PC-9 (cell line): ENCODE measurements at regions of chr3 and their contacts with region 1.

Region 1: GRCh38 chr3:38004415-38005076 is 14.0 kb downstream of the VILL start:
- DNase-seq: peak; percentile 68 to 70
- H3K4me3 ChIP-seq: no peak overlapping the region
- H3K27ac ChIP-seq: no peak overlapping the region
- H3K4me1 ChIP-seq: no peaks in the 10 kb centered on the region
- H3K27me3 ChIP-seq: no peaks in the 10 kb centered on the region
- CTCF ChIP-seq: peak; percentile 75

Region 2: DNA sequence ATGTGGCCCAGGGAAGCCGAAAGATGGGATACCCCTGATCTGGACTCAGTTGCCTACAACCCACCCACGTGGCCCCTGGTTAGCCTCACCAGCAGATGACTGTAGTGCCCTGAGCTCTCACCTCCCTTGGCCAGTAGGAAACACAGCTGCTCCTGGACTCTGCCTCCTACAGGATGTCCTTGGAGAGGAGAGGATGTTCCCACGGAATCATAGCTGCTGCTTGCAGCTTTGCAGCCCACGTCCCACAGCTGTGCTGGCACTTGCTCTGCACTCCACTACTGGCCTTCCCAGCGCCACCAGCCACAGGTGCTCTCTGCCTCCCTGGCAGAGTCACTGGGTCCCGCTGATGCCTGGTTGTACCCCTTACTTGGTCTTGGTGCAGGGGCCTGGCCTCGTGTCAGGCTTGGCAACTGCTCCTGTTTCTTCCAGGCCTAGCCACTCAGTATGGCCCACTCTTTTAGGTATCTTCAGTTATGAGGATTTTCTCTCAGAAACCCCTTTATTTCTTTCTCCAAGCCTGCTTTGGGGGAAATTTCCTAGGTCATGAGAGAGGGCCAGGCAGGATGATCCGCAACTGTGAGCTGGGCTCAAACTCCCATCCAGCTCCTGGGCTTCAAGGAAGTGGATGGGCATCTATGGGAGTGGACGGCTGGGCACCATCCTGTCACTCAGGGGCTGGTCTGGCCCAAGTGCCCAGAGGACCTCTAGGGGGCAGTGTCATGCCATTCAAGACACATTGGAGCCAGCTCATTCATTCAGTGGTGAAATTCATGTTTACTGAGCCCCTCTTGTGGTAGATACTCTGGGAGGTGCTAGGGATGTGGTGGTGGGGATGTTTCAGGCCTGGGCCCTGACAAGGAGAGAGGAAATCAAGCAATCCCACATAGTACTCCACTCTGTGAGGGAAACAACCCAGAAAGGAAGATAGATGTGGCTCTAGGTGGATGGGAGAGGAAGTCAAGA is 30.1 kb before region 1 on chr3:
- CTCF ChIA-PET with region 1: interaction called, 6 read pairs
- POLR2A ChIA-PET with region 1: interaction called, 6 read pairs
- intact Hi-C with region 1: loop called (anchors 1 kb)
- DNase-seq: peak; percentile 47 to 62
- H3K4me3 ChIP-seq: no peak overlapping the region
- H3K27ac ChIP-seq: no peak overlapping the region
- H3K4me1 ChIP-seq: no peaks in the 10 kb centered on the region
- H3K27me3 ChIP-seq: no peaks in the 10 kb centered on the region
- CTCF ChIP-seq: peak; percentile 85

Region 3: DNA sequence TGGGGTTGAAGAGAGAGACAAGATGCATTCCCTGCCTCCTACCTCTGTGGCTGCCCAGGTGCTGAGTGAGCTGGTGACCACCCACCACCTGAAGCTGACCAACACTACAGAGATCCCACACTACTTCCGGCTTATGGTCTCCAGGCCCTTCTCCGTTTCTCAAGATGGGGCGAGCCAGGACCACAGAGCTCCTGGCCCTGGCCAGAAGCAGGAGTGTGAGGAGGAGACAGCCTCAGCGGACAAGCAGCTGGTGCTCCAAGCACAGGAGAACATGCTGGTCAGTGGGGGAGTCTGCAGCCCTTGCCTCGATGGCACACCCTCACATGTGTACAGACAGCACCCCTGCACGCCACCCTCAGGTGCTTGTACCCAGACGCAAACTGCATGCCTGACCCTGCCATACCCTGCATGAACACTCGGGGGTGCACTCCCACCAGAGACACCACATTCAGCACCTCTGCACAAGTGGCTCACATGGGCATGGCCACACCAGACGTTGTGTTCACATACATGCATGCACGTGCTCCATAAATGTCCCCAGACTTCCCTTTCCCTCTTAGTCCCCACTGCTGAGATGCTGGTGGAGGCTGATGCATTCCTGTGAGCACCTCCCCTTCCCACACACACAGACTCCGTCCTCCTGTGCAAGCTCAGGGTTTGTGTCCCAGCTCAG is 113.3 kb after region 1 on chr3:
- CTCF ChIA-PET with region 1: interaction called, 7 read pairs
- POLR2A ChIA-PET with region 1: no interaction called
- intact Hi-C with region 1: loop called (anchors 2 kb)
- DNase-seq: peak in 1 of 2 experiments; percentile 56
- H3K4me3 ChIP-seq: no peak overlapping the region
- H3K27ac ChIP-seq: no peak overlapping the region
- H3K4me1 ChIP-seq: no peaks in the 10 kb centered on the region
- H3K27me3 ChIP-seq: no peaks in the 10 kb centered on the region
- CTCF ChIP-seq: peak; percentile 67

Region 4: DNA sequence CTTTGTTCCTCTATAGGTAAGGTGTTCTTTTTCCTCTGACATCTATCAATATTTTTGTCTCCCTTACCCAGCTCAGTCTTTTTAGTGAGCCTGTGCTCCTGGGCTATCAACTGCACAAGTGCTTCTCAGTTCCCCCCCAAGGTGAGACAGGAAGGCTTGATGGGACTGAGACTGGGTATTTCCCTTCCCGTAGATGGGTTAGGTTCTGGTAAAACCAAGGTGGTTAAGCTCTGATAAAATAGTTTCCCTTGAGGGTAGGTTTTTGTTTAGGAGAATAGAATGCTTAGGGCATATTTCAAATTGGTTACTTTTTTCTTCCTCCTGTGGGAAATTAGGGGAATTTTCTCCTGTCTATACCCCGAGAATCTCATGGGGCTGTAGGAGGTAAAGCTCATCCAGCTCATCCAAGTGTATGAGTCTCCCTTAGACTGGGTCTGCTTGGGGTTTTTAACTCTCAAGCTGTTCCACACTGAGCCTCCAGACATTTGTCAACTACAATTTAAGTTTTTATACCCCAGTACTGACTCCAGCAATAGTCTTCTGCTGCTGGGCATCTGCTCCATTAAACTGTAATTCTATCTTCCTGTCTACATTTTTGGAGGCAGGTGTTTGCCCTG is 205.7 kb after region 1 on chr3:
- CTCF ChIA-PET with region 1: interaction called, 16 read pairs
- POLR2A ChIA-PET with region 1: no interaction called
- intact Hi-C with region 1: no loop called
- DNase-seq: no peak
- H3K4me3 ChIP-seq: no peak overlapping the region
- H3K27ac ChIP-seq: no peak overlapping the region
- H3K4me1 ChIP-seq: no peaks in the 10 kb centered on the region
- H3K27me3 ChIP-seq: no peaks in the 10 kb centered on the region
- CTCF ChIP-seq: no peak

Region 5: GRCh38 chr3:38479431-38480092 is 475.0 kb after region 1 on chr3:
- CTCF ChIA-PET with region 1: no interaction called
- POLR2A ChIA-PET with region 1: no interaction called
- intact Hi-C with region 1: loop called (anchors 2 kb)
- DNase-seq: peak in 1 of 2 experiments; percentile 50
- H3K4me3 ChIP-seq: no peak overlapping the region
- H3K27ac ChIP-seq: no peak overlapping the region
- H3K4me1 ChIP-seq: no peaks in the 10 kb centered on the region
- H3K27me3 ChIP-seq: no peaks in the 10 kb centered on the region
- CTCF ChIP-seq: peak; percentile 79